HCT116 (cell line): ENCODE measurements at regions of chr20 and their contacts with region 1.

Region 1: DNA sequence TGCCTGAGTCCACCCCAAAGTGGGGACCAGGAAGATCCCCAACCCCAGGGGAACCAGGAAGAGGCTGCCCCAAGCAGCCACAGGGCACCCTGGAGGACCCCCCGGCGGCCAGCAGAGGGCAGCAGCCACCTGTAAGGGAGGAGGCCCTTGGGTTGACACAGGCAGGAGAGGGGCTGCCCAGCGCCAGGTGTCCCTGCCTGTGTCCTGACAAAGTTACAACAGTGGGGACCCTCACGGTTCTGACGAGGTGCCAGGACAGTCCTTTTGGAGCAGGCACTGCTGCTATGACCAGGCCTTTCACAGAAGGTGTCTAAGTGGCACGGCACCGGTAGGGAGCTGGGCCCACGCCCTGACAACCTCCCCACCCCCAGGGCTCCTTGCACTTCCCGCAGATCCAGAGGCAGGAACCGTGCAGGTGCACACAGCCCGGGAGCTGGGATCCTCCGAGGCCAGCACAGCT is 176.7 kb downstream of the BMP7 start:
- DNase-seq: peak; percentile 34
- ATAC-seq: peak; percentile 89
- H3K4me3 ChIP-seq: no peak overlapping the region
- H3K27ac ChIP-seq: no peak overlapping the region
- H3K4me1 ChIP-seq: peaks cover 2 to 23% of the 10 kb centered on the region in 2 experiments; a peak in 2 of 4 replicates
- H3K27me3 ChIP-seq: no peaks in the 10 kb centered on the region
- CTCF ChIP-seq: peak; percentile 90 to 97 (median 95)
- POLR2A ChIP-seq: no peak
- RAD21 ChIP-seq: peak; percentile 95

Region 2: DNA sequence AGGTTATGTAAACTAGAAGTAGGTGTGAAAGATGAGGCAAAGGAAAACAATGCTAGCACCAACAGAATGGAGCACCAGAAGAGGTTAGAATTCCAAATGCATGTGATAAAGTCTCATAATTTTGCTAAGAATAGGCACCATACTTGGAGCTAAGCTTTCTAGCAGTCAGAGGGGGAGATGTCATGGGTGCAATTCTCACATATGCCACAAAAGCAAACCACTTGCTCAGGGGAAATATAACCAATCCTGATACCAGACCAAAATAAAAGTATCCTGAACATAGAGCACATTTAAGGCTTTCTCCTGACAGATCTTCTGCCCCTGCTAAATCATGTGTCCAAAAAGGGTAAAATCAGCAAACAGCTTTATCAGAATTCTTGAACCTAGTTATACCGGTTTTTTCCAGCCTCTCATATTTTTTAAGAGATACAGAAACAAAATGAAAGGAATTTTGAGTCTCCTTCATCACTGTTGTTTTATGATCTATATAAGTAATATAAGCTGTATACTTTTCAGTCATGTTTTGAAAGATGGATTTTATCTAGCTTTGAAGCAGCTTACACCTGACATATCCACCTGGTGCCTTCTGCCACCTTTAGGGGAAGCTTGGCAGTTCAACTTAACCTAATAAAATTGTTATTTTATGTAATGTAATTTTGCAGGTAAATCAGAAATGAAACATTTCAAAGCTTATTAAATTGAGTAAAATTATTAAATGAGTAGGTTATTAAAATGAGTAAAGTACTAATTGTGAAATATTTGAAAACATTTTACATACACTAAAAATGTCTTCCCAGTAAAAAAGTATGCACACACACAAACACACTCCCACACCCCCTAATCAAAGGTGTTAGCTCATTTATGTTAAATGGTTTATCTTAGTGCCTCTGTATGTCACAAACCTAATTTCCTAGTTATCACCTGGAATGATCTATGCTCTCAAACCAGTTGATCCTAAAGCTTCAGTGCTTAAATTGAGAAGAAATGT is 242.7 kb after region 1 on chr20:
- CTCF ChIA-PET with region 1: interaction called, 100 read pairs
- POLR2A ChIA-PET with region 1: no interaction called
- RAD21 ChIA-PET with region 1: interaction called, 8 read pairs
- intact Hi-C with region 1: loop called (anchors 1 kb)
- DNase-seq: no peak
- ATAC-seq: peak; percentile 79
- H3K4me3 ChIP-seq: no peak overlapping the region
- H3K27ac ChIP-seq: no peak overlapping the region
- H3K4me1 ChIP-seq: peaks cover under 1 to 1% of the 10 kb centered on the region in 2 experiments; a peak in 2 of 4 replicates
- H3K27me3 ChIP-seq: peaks cover 19% of the 10 kb centered on the region
- CTCF ChIP-seq: peak; percentile 54 to 79 (median 57); a peak in 5 of 6 replicates
- POLR2A ChIP-seq: no peak
- RAD21 ChIP-seq: peak; percentile 72

Region 3: DNA sequence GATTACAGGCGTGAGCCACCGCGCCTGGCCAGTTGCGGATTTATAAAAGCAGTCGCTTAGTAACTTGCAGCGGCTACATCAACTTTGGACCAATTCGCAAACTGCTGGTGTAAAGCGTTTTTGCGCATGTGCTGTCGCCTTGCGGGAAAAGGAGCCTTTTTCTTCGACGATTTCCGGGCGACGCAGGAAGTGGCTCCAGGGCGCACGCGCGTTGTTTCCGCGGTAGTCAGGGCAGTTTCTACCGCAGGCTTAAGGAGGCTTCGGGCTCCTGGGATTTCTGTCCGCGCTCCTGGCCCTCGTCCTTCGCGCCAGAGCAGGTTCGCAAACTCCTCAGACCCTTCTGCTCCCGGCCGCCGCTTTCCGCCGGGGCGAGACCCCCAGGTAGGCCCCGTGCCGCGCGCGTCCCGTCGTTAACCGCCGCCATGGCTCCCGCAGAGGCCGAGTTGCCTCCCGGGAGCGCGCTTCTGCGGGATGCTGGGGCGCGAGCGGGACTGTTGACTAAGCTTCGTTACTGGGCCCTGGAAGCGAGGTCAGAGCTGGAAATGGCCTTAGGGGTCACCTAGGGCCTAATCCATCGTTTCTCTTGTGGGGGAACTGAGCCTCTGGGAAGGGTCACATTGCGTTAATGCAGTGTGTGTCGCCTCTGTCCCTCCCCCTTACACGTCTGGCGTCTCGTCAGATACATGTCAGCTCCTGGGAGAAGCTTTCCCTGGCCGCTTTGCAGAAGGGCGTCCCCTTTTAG is 261.5 kb after region 1 on chr20 and contains the start of gene RAE1:
- CTCF ChIA-PET with region 1: interaction called, 20 read pairs
- POLR2A ChIA-PET with region 1: interaction called, 4 read pairs
- RAD21 ChIA-PET with region 1: interaction called, 4 read pairs
- intact Hi-C with region 1: loop called (anchors 1 kb)
- DNase-seq: peak; percentile 89
- ATAC-seq: peak; percentile 86
- H3K4me3 ChIP-seq: peak within 1 kb of the TSS; percentile 65 to 96
- H3K27ac ChIP-seq: peak within 1 kb of the TSS; percentile 84
- H3K4me1 ChIP-seq: peaks cover 9 to 17% of the 10 kb centered on the region in 2 experiments
- H3K27me3 ChIP-seq: no peaks in the 10 kb centered on the region
- CTCF ChIP-seq: no peak
- POLR2A ChIP-seq: peak; percentile 49
- RAD21 ChIP-seq: no peak
- total RNA-seq, gene RAE1: 46.3 TPM

Region 4: DNA sequence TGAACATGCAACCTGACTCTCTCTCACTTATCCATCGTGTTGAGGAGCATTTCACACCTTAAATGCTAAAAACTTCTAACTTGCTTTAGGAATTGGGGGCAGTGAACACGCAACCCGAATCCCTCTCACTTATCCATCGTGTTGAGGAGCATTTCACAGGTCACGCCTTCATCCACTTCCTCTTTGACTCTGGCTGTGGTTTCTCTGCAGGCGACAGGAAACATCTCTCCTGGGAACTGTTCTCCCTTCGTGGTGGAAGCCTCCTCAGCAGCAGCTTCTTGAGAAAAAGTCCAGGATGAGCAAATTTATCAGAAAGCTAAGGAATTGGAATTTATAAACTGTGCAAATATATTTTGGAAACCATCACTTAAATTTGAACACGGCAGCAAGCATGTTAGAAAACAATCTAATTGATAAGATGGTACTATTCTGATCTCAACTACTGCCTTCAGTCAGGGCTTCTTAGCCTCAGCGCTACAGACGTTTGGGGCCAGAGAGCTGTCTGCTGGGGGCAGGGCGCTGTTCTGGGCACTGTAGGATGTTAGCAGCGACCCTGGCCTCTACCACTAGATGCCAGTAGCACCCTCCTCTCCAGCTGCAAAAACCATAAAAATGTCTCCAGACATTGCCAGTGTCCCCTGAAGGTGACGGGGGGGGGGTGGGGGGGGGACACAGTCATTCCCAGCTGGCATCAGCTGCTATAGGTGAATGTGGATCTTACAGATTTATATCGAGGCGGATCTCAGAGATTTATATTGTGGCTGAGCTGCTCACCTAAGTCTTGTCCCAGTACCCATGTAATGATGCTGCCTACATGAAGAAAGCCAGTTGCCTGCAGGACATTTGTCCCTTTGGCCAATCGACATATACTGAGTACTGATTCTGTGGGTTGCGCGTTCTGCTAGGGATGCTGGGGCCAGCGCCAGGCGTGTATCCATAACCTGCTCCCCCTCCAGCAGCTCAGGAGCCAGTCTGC is 409.0 kb after region 1 on chr20:
- CTCF ChIA-PET with region 1: no interaction called
- POLR2A ChIA-PET with region 1: no interaction called
- RAD21 ChIA-PET with region 1: no interaction called
- intact Hi-C with region 1: loop called (anchors 2 kb)
- DNase-seq: peak; percentile 19
- ATAC-seq: peak; percentile 88
- H3K4me3 ChIP-seq: no peak overlapping the region
- H3K27ac ChIP-seq: no peak overlapping the region
- H3K4me1 ChIP-seq: peaks cover 7 to 14% of the 10 kb centered on the region in 2 experiments; a peak in 3 of 4 replicates
- H3K27me3 ChIP-seq: no peaks in the 10 kb centered on the region
- CTCF ChIP-seq: peak; percentile 45 to 61 (median 51)
- POLR2A ChIP-seq: no peak
- RAD21 ChIP-seq: peak; percentile 55

Region 5: DNA sequence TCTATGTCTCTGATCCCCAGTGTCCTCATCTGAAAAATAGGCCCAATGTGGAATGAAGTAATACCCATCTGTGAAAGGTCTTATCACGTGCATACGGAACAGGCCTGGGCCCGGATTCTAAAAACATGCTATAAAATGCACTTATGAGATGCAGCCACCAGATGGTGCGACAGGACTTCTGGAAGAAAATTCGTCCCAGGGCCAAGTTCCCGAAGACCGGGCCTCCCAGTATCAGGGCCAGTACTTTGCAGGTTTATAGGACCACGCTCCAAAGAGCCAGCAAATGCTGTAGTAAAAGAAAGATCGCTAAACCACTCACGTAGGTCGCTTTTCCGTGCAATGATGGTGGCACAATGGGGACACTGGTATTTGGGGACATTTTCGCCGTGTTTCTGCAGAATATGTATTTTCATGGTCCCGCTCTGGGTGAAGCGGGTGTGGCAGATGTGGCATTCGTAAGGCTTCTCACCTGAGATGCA is 424.6 kb after region 1 on chr20:
- CTCF ChIA-PET with region 1: no interaction called
- POLR2A ChIA-PET with region 1: no interaction called
- RAD21 ChIA-PET with region 1: no interaction called
- intact Hi-C with region 1: loop called (anchors 5 kb)
- DNase-seq: peak; percentile 58
- ATAC-seq: peak; percentile 65
- H3K4me3 ChIP-seq: no peak overlapping the region
- H3K27ac ChIP-seq: no peak overlapping the region
- H3K4me1 ChIP-seq: peaks cover 0 to 4% of the 10 kb centered on the region in 2 experiments; a peak in 1 of 4 replicates
- H3K27me3 ChIP-seq: 0 out of 2 replicates have a peak, but pooled peaks cover 8% of the 10 kb centered on the region
- CTCF ChIP-seq: peak; percentile 66 to 92 (median 81)
- POLR2A ChIP-seq: no peak
- RAD21 ChIP-seq: peak; percentile 91